ENCODE measurements at regions of chr2 and their contacts with region 1.

Region 1: DNA sequence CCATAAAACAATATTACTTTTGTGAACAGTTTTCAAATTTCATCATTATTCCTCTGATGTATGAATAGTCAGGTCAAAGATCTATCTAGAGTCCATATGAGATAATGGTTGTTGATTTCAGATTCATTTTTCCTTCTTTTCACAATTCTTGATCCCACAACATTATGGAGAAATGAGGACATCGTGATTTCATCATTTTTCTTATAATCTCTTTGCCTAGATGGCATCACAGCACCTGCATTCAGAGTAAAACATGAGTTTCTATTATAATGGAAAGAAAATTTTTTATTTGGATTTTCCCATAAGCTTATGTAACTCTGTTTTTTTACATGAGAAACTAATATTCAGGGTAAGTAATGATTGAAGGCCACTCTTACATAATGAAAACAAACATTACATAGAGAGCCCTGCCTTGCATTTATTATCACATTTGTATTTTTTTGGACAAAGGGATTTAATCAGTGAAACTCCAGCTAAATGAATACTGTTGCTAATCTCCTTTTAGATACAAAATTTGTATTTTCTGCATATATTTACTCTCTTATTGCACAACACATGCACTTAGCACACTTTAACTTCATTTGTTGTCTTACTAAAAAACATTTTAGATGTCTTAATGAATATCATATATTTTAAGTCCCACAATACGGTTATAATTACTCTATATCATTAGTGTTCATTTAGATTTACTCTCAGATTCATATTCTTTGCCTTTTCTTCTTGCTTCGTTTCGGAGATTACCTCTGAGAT is 188.4 kb upstream of the KYNU start:
- DNase-seq: no peak
- ATAC-seq: no peak
- H3K4me3 ChIP-seq: no peak overlapping the region
- H3K27ac ChIP-seq: no peak overlapping the region
- H3K4me1 ChIP-seq: no peaks in the 10 kb centered on the region
- H3K27me3 ChIP-seq: no peaks in the 10 kb centered on the region

Region 2: DNA sequence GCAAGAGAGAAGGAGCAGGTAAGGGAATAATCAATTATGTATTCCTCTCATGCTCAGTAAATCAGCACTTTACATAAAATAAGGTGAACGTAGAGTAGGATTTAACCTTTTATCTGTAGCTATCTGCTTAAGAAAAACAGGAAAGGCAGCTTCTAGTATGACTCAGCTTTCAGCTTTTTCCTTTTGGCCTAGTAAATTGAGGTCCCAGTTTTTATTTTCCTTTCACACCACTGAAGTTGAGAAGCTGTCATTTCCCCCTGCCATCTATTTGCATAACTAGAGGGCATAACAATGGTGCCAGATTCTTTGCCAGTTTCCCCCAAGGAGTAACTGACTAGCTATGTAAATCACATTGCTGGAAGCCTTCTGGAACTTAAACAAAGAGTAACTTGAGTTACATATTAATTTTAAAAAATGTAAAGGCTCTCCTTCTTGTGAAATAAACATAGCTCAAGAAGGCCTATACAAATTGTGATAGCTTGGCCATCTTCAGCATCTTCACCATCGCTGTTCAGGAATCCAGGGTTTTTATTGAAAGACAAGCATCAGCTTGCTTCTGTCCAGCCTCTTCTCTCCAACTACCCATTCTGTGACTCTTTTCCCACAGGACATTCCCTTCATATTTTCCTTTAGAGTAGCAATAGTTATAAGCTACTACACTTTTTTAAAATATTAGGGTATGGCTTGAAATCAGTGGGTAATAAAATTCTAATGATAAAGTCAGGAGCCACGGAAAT is 285.4 kb after region 1 on chr2:
- intact Hi-C with region 1: loop called in 1 of 2 experiments (anchors 5 kb)
- DNase-seq: no peak
- ATAC-seq: no peak
- H3K4me3 ChIP-seq: no peak overlapping the region
- H3K27ac ChIP-seq: no peak overlapping the region
- H3K4me1 ChIP-seq: no peaks in the 10 kb centered on the region
- H3K27me3 ChIP-seq: no peaks in the 10 kb centered on the region

Measured in aorta (tissue), 5 donors.